Natural killer cell (primary cell): ENCODE measurements at regions of chr1 and their contacts with region 1.

Region 1: GRCh38 chr1:67194209-67194863 is 28.1 kb downstream of the IL23R start:
- DNase-seq: peak in 1 of 2 donors; percentile 74
- ATAC-seq: peak; percentile 73 to 80 (median 73)
- H3K4me3 ChIP-seq: no peak overlapping the region
- H3K4me3 Mint-ChIP-seq: peak overlapping the region; percentile 81
- H3K27ac ChIP-seq: peak overlapping the region; percentile 66
- H3K27ac Mint-ChIP-seq: no peak overlapping the region
- H3K4me1 ChIP-seq: peaks cover 24% of the 10 kb centered on the region
- H3K4me1 Mint-ChIP-seq: peaks cover 16 to 18% of the 10 kb centered on the region in 2 donors
- H3K27me3 ChIP-seq: no peaks in the 10 kb centered on the region
- H3K27me3 Mint-ChIP-seq: peaks cover 0 to 5% of the 10 kb centered on the region in 2 donors
- CTCF ChIP-seq: no peak

Region 2: GRCh38 chr1:66924756-66925557 is 269.4 kb before region 1 on chr1 and contains the starts of genes DNAI4 and MIER1:
- intact Hi-C with region 1: loop called (anchors 10 kb)
- DNase-seq: peak; percentile 95 to 98
- ATAC-seq: peak; percentile 94 to 99 (median 94)
- H3K4me3 ChIP-seq: peak within 1 kb of the TSS; percentile 71
- H3K4me3 Mint-ChIP-seq: peak within 1 kb of the TSS; percentile 91
- H3K27ac ChIP-seq: peak within 1 kb of the TSS; percentile 98
- H3K27ac Mint-ChIP-seq: peak within 1 kb of the TSS; percentile 96
- H3K4me1 ChIP-seq: peaks cover 23% of the 10 kb centered on the region
- H3K4me1 Mint-ChIP-seq: peaks cover 27 to 32% of the 10 kb centered on the region in 2 donors
- H3K27me3 ChIP-seq: no peaks in the 10 kb centered on the region
- H3K27me3 Mint-ChIP-seq: no peaks in the 10 kb centered on the region
- CTCF ChIP-seq: no peak
- total RNA-seq, gene DNAI4: 1.4 to 4.3 (median 2.2) TPM
- total RNA-seq, gene MIER1: 87.9 to 94.3 (median 93.2) TPM

Region 3: GRCh38 chr1:66938613-66939012 is 255.7 kb before region 1 on chr1:
- intact Hi-C with region 1: no loop called
- DNase-seq: no peak
- ATAC-seq: no peak
- H3K4me3 ChIP-seq: no peak overlapping the region
- H3K4me3 Mint-ChIP-seq: no peak overlapping the region
- H3K27ac ChIP-seq: no peak overlapping the region
- H3K27ac Mint-ChIP-seq: peak overlapping the region; percentile 14 to 54
- H3K4me1 ChIP-seq: peaks cover 15% of the 10 kb centered on the region
- H3K4me1 Mint-ChIP-seq: peaks cover 58 to 63% of the 10 kb centered on the region in 2 donors
- H3K27me3 ChIP-seq: no peaks in the 10 kb centered on the region
- H3K27me3 Mint-ChIP-seq: no peaks in the 10 kb centered on the region
- CTCF ChIP-seq: no peak

Region 4: DNA sequence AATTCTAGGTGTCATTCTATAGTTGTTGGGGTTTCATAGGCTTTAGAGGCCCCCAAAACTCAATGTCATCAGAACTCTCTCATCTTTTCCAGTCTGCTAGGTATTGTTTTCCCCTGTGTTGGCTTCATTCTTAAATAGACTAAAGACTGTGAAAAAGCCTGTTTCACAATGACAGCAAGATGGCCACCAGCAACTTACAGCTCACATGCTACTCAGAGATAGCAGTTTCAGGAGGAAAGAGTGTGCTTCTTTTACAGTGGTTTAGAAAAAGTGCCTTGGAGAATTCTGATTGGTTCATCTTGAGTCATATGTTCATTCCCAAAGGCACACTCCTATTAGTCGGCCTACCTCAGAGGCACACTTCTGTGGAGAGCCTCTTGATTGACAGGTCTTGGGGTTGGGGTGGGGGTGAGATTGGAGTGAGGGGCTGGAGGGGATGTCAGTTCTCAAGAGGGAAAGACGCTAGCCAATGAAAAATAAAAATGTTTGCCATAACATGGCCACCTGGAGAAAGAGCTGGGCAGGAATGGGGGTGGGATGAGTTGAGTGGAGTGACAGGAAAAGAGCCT is 19.5 kb before region 1 on chr1:
- intact Hi-C with region 1: loop called (anchors 1 kb)
- DNase-seq: no peak
- ATAC-seq: no peak
- H3K4me3 ChIP-seq: no peak overlapping the region
- H3K4me3 Mint-ChIP-seq: no peak overlapping the region
- H3K27ac ChIP-seq: no peak overlapping the region
- H3K27ac Mint-ChIP-seq: no peak overlapping the region
- H3K4me1 ChIP-seq: peaks cover 11% of the 10 kb centered on the region
- H3K4me1 Mint-ChIP-seq: peaks cover 30 to 31% of the 10 kb centered on the region in 2 donors
- H3K27me3 ChIP-seq: no peaks in the 10 kb centered on the region
- H3K27me3 Mint-ChIP-seq: peaks cover 0 to 3% of the 10 kb centered on the region in 2 donors
- CTCF ChIP-seq: no peak

Region 5: GRCh38 chr1:67227196-67227595 is 32.9 kb after region 1 on chr1:
- intact Hi-C with region 1: loop called (anchors 2 kb)
- DNase-seq: no peak
- ATAC-seq: peak in 1 of 3 donors; percentile 8
- H3K4me3 ChIP-seq: no peak overlapping the region
- H3K4me3 Mint-ChIP-seq: peak overlapping the region; percentile 82
- H3K27ac ChIP-seq: peak overlapping the region; percentile 70
- H3K27ac Mint-ChIP-seq: peak overlapping the region; percentile 90 to 94
- H3K4me1 ChIP-seq: peaks cover 26% of the 10 kb centered on the region
- H3K4me1 Mint-ChIP-seq: peaks cover 40 to 46% of the 10 kb centered on the region in 2 donors
- H3K27me3 ChIP-seq: no peaks in the 10 kb centered on the region
- H3K27me3 Mint-ChIP-seq: no peaks in the 10 kb centered on the region
- CTCF ChIP-seq: no peak

Region 6: DNA sequence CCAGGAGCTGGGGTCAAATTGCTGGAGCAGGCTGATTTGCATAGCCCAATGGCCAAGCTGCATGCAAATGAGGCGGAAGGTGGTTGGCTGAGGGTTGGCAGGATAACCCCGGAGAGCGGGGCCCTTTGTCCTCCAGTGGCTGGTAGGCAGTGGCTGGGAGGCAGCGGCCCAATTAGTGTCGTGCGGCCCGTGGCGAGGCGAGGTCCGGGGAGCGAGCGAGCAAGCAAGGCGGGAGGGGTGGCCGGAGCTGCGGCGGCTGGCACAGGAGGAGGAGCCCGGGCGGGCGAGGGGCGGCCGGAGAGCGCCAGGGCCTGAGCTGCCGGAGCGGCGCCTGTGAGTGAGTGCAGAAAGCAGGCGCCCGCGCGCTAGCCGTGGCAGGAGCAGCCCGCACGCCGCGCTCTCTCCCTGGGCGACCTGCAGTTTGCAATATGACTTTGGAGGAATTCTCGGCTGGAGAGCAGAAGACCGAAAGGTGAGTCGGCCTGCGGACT is 490.8 kb after region 1 on chr1 and contains the start of gene GADD45A:
- intact Hi-C with region 1: loop called (anchors 5 kb)
- DNase-seq: peak; percentile 95 to 98
- ATAC-seq: peak; percentile 85 to 96 (median 90)
- H3K4me3 ChIP-seq: peak within 1 kb of the TSS; percentile 94
- H3K4me3 Mint-ChIP-seq: peak within 1 kb of the TSS; percentile 96
- H3K27ac ChIP-seq: peak within 1 kb of the TSS; percentile 63
- H3K27ac Mint-ChIP-seq: peak within 1 kb of the TSS; percentile 81 to 94
- H3K4me1 ChIP-seq: peaks cover 14% of the 10 kb centered on the region
- H3K4me1 Mint-ChIP-seq: peaks cover 24 to 32% of the 10 kb centered on the region in 2 donors
- H3K27me3 ChIP-seq: no peaks in the 10 kb centered on the region
- H3K27me3 Mint-ChIP-seq: no peaks in the 10 kb centered on the region
- CTCF ChIP-seq: no peak
- total RNA-seq, gene GADD45A: 21.8 to 30.3 (median 26.6) TPM

Region 7: DNA sequence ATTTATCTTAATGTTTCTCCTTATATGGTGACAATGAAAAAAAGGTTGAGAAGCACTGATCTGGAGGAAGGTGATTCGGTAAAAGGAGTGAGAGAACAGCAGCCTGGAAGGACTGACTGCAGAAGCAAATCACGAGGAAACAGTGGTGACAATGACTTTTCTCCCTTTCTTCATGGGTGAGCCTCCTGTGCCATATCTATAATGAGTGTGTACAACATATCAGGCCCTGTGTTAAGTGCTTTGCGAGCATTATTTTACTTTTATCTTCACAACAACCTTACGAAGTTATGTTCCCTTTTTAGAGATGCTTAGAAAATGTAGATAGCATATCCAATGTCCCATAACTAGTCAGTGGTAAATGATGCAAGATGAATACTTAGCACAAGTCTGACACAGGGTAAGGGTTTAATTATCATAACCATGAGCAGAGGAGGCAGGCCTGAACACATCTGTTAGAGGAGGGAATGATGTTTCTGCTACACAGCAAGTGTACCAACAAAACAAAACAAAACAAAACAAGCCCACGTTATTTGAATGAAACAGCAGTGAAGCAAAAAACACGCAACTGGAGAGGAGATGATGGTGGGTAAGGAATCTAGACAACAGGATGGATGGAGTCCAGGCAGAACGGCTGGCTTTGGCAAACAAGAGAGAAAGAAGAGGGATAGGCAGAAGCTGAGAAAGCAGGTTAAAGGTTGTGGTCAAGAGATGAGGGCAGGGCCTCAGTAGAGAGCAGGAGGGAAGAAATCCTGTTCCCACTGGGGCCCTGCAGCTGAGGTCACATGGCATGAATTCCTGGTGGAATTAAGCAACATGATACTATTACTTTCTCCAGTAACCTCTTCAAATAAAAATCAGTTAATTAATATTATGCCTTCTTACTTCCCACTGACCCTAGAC is 609.3 kb after region 1 on chr1:
- intact Hi-C with region 1: no loop called
- DNase-seq: no peak
- ATAC-seq: no peak
- H3K4me3 ChIP-seq: no peak overlapping the region
- H3K4me3 Mint-ChIP-seq: no peak overlapping the region
- H3K27ac ChIP-seq: no peak overlapping the region
- H3K27ac Mint-ChIP-seq: no peak overlapping the region
- H3K4me1 ChIP-seq: no peaks in the 10 kb centered on the region
- H3K4me1 Mint-ChIP-seq: no peaks in the 10 kb centered on the region
- H3K27me3 ChIP-seq: peaks cover 3% of the 10 kb centered on the region
- H3K27me3 Mint-ChIP-seq: peaks cover 19 to 55% of the 10 kb centered on the region in 2 donors
- CTCF ChIP-seq: no peak